HepG2 (cell line): ENCODE measurements at regions of chr18 and their contacts with region 1.

Region 1: DNA sequence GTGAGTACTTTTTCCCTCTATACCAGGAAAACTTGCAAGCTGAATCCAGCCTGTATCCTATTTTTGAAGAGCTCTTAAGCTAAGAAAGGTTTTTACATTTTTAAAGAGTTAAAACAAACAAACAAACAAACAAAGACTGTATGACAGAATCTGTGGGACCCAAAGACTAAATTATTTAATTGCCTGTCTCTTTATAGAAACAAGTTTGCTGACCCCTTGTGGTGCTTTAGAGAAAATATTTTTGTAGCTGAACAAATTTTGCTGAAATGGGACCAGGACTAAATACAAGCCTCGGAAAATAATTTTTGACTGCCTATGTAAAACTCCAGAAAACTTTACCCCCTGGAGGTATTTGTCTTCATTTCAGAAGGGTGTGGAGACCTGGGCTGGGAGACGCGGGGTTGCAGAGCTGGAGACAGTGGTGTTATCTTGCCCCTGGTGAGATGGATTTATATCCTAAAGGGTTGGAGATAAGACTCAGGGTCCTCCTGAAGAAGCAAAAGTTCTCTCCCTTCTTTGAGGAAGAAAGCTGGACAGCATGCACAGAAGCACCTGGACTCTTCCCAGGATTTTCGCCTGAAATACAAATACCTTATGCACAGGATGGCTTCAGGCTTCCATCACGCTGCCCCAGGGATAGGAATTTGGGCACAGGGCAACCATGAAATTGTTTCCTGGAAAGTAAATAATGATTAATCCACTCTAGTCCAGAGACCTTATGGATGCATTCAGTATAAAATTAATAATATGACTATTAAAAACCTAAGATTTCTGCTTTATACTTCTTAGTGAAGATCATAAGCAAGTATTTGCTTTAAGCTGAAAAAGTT is 54.3 kb downstream of the TMX3 start:
- DNase-seq: peak; percentile 33
- ATAC-seq: no peak
- H3K4me3 ChIP-seq: no peak overlapping the region
- H3K27ac ChIP-seq: no peak overlapping the region
- H3K4me1 ChIP-seq: no peaks in the 10 kb centered on the region
- H3K27me3 ChIP-seq: no peaks in the 10 kb centered on the region
- CTCF ChIP-seq: peak; percentile 32; the same call in 1 of the 2 replicates
- EP300 ChIP-seq: no peak
- POLR2A ChIP-seq: no peak
- RAD21 ChIP-seq: no peak

Region 2: GRCh38 chr18:68376926-68377325 is 283.6 kb before region 1 on chr18:
- CTCF ChIA-PET with region 1: no interaction called
- POLR2A ChIA-PET with region 1: no interaction called
- in situ Hi-C with region 1: no loop called
- intact Hi-C with region 1: no loop called
- DNase-seq: no peak
- ATAC-seq: no peak
- H3K4me3 ChIP-seq: no peak overlapping the region
- H3K27ac ChIP-seq: no peak overlapping the region
- H3K4me1 ChIP-seq: no peaks in the 10 kb centered on the region
- H3K27me3 ChIP-seq: no peaks in the 10 kb centered on the region
- CTCF ChIP-seq: no peak
- EP300 ChIP-seq: no peak
- POLR2A ChIP-seq: no peak
- RAD21 ChIP-seq: no peak

Region 3: GRCh38 chr18:68604256-68604655 is 56.3 kb before region 1 on chr18:
- CTCF ChIA-PET with region 1: no interaction called
- POLR2A ChIA-PET with region 1: no interaction called
- in situ Hi-C with region 1: no loop called
- intact Hi-C with region 1: no loop called
- DNase-seq: no peak
- ATAC-seq: no peak
- H3K4me3 ChIP-seq: no peak overlapping the region
- H3K27ac ChIP-seq: no peak overlapping the region
- H3K4me1 ChIP-seq: no peaks in the 10 kb centered on the region
- H3K27me3 ChIP-seq: no peaks in the 10 kb centered on the region
- CTCF ChIP-seq: no peak
- EP300 ChIP-seq: no peak
- POLR2A ChIP-seq: no peak
- RAD21 ChIP-seq: no peak

Region 4: DNA sequence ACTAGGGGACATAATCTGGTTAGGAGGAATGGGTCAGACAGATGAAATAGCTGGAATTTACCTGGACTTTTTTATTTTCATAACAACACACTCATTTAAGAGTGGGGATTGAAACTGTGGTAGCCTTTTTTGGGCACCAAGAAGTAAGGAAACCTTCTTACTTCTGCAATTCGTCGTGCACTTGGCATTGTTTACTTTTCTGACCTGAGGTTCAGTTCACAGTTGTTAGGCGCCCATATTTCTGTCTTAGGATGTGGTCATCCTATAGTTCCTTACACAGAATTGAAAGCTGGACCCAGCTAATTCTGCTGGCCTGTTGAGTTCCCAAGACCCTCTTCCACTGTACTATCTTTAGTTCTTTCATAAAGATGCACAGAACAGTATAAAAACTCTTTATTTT is 18.6 kb before region 1 on chr18:
- CTCF ChIA-PET with region 1: no interaction called
- POLR2A ChIA-PET with region 1: no interaction called
- in situ Hi-C with region 1: no loop called
- intact Hi-C with region 1: no loop called
- DNase-seq: no peak
- ATAC-seq: no peak
- H3K4me3 ChIP-seq: no peak overlapping the region
- H3K27ac ChIP-seq: no peak overlapping the region
- H3K4me1 ChIP-seq: no peaks in the 10 kb centered on the region
- H3K27me3 ChIP-seq: no peaks in the 10 kb centered on the region
- CTCF ChIP-seq: no peak
- EP300 ChIP-seq: no peak
- POLR2A ChIP-seq: no peak
- RAD21 ChIP-seq: no peak

Region 5: GRCh38 chr18:68735483-68736343 is 75.1 kb after region 1 on chr18:
- CTCF ChIA-PET with region 1: no interaction called
- POLR2A ChIA-PET with region 1: no interaction called
- in situ Hi-C with region 1: no loop called
- intact Hi-C with region 1: loop called (anchors 1 kb)
- DNase-seq: peak; percentile 28
- ATAC-seq: peak; percentile 80
- H3K4me3 ChIP-seq: no peak overlapping the region
- H3K27ac ChIP-seq: no peak overlapping the region
- H3K4me1 ChIP-seq: no peaks in the 10 kb centered on the region
- H3K27me3 ChIP-seq: no peaks in the 10 kb centered on the region
- CTCF ChIP-seq: peak; percentile 75
- EP300 ChIP-seq: no peak
- POLR2A ChIP-seq: no peak
- RAD21 ChIP-seq: peak; percentile 59

Region 6: DNA sequence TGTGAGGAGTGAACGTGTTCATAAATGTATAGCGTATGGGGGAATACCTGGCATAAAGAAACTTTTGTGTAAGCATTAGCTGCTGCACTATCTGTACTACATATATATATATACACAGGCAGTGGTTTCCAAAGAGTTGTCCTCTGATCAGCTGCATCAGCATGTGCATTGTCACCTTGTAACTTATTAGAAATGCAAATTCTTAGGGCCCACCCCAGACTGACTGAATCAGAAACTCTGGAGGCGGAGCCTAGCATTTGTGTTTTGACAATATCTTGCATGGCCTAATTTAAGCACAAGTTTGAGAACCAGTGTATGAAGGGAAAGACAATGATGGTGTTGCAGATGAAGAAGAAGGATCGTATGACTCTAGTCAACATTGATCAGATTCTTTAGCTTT is 436.8 kb after region 1 on chr18:
- CTCF ChIA-PET with region 1: no interaction called
- POLR2A ChIA-PET with region 1: no interaction called
- in situ Hi-C with region 1: no loop called
- intact Hi-C with region 1: no loop called
- DNase-seq: no peak
- ATAC-seq: no peak
- H3K4me3 ChIP-seq: no peak overlapping the region
- H3K27ac ChIP-seq: no peak overlapping the region
- H3K4me1 ChIP-seq: no peaks in the 10 kb centered on the region
- H3K27me3 ChIP-seq: no peaks in the 10 kb centered on the region
- CTCF ChIP-seq: no peak
- EP300 ChIP-seq: no peak
- POLR2A ChIP-seq: no peak
- RAD21 ChIP-seq: no peak